MCF 10A (cell line): ENCODE measurements at regions of chr2 and their contacts with region 1.

Region 1: DNA sequence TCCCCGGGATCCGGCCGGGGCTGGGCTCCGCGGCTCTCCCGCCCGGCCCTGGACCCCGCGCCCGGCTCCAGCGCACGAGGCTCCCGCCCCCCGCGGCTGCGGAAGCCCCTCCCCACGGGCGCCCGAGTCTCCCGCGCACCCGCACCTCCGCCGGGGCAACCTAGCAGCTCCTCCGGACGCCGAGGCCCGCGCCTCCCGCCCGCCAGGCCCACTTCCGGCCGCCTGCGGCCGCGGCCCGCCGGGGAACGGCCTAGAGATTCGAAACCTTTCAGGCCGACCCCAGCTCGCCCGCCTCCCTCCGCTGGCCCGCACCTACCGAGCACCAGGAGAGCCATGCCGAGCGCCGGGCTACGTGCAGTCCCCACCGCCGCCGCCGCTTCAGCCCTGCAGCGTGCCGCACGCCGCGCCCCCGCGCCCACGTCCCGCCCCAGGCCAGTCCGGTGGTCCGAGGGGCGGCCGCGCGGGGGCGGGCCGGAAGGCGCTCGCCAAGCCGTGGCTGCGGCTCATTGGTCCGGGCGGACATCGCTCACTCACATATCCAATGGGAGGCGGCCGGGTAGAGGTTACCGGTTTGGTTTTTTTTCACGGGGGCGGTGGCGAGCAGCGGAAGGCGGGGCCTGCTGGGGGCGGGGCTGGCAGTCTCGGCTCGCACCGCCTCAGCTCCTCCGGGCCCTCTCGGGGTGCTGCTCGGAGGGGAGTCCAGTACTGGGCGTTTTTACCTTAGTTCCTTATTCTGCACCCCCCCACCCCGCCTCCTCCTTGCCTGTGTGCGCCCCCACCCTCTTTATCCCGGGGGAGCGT is at the start of gene PDIA6:
- DNase-seq: peak; percentile 96
- H3K4me3 Mint-ChIP-seq: peak within 1 kb of the TSS; percentile 84
- H3K27ac Mint-ChIP-seq: peak within 1 kb of the TSS; percentile 92
- H3K4me1 Mint-ChIP-seq: peaks cover 27% of the 10 kb centered on the region
- H3K27me3 Mint-ChIP-seq: peaks cover 18% of the 10 kb centered on the region
- CTCF ChIP-seq: no peak
- total RNA-seq, gene PDIA6: 254 and 339 TPM in 2 replicates

Region 2: DNA sequence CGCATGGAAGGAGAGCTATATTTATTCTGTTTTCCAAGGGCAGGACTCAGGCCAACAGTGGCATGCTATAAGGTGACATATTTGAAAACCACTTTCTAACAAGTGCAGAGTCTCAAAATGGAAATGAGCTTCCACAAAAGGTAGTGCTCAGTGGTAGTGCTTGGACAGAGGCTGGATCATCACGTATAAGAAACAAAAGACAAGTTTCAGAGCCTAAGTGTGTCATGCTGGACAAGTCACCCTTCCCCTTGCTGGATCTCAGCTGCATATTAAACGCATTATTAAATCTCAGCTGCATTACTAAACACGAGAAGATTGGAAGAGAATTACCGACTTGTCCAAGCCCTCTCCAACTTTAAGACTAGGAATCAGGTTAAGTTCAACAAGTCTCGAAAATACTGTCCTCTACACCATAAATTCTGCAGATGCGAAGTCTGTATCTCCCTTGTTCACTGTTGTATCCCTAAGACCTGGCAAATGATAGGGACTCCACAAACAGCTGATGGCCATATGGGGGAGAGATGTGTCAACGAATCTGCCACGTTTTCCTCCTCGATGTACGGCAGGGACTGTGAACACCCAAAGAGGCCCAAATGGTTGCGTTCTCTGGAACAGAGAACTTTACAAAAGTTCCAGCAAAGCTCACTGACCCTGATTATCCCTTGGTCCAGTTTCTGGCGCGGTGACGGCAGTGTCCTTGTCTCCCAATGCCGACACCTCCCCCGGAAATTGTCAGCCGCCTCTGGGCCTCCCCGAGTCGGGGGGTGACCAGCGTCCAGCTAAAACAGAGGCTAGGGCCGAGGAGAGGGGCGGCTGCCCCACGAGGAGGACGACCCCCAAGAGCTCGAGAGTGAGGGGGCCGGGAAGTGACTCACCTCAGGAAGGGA is 123.4 kb before region 1 on chr2:
- CTCF ChIA-PET with region 1: interaction called, 3 read pairs
- POLR2A ChIA-PET with region 1: interaction called, 10 read pairs
- intact Hi-C with region 1: no loop called
- DNase-seq: peak; percentile 7
- H3K4me3 Mint-ChIP-seq: no peak overlapping the region
- H3K27ac Mint-ChIP-seq: no peak overlapping the region
- H3K4me1 Mint-ChIP-seq: peaks cover 5% of the 10 kb centered on the region
- H3K27me3 Mint-ChIP-seq: no peaks in the 10 kb centered on the region
- CTCF ChIP-seq: no peak

Region 3: DNA sequence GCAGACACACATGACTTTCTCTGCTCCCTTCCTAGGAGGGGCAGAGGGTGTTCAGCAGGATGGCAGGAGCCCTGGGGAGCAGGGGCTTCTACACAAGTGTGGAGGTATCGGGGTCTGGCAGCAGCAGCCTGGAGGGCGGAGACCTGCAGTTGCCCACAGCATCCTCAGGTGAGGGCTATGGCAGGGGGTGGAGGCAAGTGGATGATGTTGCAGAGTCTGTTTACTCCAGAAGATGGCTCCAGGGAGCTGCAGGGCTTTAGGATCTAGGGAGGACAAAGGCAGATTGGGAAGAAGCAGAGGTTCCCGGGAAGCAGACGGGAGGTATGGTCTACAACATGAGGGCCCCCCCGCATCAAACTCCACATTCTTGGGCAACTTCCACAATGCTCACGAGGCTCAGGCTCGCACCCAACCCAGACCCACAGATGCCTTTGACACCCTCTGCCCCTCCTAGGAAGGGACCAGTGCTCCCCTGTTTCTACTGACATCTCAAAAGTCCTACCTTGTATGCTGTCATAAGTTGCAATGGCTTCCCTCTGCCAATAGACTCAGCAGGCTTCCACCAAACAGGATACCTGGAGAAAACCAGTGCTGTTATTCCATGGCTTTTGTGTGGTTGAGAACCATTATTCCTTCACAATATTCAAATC is 103.1 kb before region 1 on chr2:
- CTCF ChIA-PET with region 1: interaction called, 5 read pairs
- POLR2A ChIA-PET with region 1: no interaction called
- intact Hi-C with region 1: loop called (anchors 2 kb)
- DNase-seq: peak; percentile 71
- H3K4me3 Mint-ChIP-seq: no peak overlapping the region
- H3K27ac Mint-ChIP-seq: no peak overlapping the region
- H3K4me1 Mint-ChIP-seq: peaks cover 7% of the 10 kb centered on the region
- H3K27me3 Mint-ChIP-seq: peaks cover 52% of the 10 kb centered on the region
- CTCF ChIP-seq: peak; percentile 53

Region 4: GRCh38 chr2:10717613-10718012 is 94.9 kb before region 1 on chr2:
- CTCF ChIA-PET with region 1: interaction called, 3 read pairs
- POLR2A ChIA-PET with region 1: interaction called, 11 read pairs
- intact Hi-C with region 1: no loop called
- DNase-seq: peak; percentile 88
- H3K4me3 Mint-ChIP-seq: no peak overlapping the region
- H3K27ac Mint-ChIP-seq: peak overlapping the region; percentile 59
- H3K4me1 Mint-ChIP-seq: peaks cover 22% of the 10 kb centered on the region
- H3K27me3 Mint-ChIP-seq: peaks cover 14% of the 10 kb centered on the region
- CTCF ChIP-seq: no peak

Region 5: DNA sequence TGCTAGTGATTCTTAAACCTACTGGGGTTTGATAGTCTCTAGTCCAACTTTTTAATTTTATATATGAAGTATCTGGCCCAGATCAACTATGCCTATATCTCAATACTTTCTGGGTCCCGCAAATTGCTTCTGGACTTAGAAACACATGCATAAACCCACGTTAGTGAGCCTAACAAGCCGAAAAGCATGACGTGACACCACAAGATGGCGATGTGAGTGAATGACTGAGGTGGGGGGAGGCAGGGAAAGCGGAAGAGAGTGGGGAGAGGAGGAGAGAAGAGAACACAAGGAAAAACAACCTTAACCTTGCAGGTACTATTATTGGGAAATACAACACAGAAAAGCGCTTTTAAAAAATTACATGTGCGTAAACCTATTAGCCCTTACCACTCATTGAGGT is 13.8 kb before region 1 on chr2:
- CTCF ChIA-PET with region 1: interaction called, 3 read pairs
- POLR2A ChIA-PET with region 1: interaction called, 10 read pairs
- intact Hi-C with region 1: no loop called
- DNase-seq: no peak
- H3K4me3 Mint-ChIP-seq: no peak overlapping the region
- H3K27ac Mint-ChIP-seq: no peak overlapping the region
- H3K4me1 Mint-ChIP-seq: peaks cover 5% of the 10 kb centered on the region
- H3K27me3 Mint-ChIP-seq: no peaks in the 10 kb centered on the region
- CTCF ChIP-seq: no peak

Region 6: DNA sequence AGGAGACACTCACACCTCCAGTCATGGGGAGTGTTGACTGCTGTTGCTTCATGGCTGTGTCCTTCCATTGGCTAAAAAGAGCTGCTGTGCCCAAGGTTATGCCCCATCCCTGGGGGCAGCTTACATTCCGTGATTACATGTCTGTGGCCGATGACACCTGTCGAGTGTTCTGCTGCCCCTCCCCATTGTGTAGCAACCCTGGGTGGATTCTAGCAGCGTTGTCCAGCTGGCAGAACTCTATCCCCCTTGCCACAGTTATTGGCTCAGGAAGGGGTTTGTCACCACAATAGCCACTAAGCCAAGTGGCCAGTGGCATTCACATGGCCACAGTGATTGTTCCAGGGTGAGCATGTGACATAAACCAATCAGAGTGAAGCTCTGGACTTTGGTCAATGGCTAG is 11.6 kb after region 1 on chr2:
- CTCF ChIA-PET with region 1: interaction called, 5 read pairs
- POLR2A ChIA-PET with region 1: interaction called, 10 read pairs
- intact Hi-C with region 1: no loop called
- DNase-seq: no peak
- H3K4me3 Mint-ChIP-seq: no peak overlapping the region
- H3K27ac Mint-ChIP-seq: no peak overlapping the region
- H3K4me1 Mint-ChIP-seq: no peaks in the 10 kb centered on the region
- H3K27me3 Mint-ChIP-seq: peaks cover 69% of the 10 kb centered on the region
- CTCF ChIP-seq: no peak